ENCODE measurements at regions of chr19 and their contacts with region 1.

Region 1: DNA sequence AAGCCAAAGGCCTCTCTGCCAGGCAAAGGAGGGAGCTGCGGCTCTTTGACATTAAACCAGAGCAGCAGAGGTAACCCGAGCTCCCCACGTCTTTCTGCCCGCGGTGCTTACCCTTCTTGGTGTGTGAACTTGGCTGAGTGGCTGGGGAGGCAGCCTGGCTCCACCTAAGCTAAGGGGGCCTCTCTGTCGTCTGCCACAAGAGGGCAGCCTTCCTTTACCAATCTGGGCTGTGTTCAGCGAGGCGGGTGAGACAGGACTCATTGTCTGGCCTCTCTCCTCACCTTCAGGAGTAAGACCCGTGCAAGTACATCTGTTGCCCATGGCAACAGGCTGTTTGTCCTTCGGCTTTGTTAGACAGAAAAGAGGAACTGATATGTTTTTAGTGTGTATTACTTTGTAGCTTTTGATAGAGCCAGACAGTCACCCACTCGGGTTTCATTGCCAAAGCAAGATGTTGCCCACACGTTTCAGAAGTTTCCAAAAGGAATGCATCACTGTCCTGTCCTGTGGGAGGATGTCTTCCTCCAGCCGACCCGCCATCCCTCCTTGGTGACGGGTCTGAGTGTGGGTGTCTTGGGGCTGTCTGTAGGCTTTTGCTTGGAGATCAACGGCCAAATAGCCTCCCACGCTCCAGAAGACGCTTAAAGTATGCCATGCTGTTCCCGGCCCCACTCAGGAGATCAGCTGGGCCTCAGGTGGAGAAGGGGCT is 4.6 kb downstream of the POP4 start:
- DNase-seq: peak in 1 of 2 donors; percentile 89
- H3K4me3 ChIP-seq: no peak overlapping the region
- H3K27ac ChIP-seq: no peak overlapping the region
- H3K4me1 ChIP-seq: peaks cover 0 to 3% of the 10 kb centered on the region in 2 donors
- H3K27me3 ChIP-seq: no peaks in the 10 kb centered on the region
- CTCF ChIP-seq: peak; percentile 78 to 86 (median 83)

Region 2: DNA sequence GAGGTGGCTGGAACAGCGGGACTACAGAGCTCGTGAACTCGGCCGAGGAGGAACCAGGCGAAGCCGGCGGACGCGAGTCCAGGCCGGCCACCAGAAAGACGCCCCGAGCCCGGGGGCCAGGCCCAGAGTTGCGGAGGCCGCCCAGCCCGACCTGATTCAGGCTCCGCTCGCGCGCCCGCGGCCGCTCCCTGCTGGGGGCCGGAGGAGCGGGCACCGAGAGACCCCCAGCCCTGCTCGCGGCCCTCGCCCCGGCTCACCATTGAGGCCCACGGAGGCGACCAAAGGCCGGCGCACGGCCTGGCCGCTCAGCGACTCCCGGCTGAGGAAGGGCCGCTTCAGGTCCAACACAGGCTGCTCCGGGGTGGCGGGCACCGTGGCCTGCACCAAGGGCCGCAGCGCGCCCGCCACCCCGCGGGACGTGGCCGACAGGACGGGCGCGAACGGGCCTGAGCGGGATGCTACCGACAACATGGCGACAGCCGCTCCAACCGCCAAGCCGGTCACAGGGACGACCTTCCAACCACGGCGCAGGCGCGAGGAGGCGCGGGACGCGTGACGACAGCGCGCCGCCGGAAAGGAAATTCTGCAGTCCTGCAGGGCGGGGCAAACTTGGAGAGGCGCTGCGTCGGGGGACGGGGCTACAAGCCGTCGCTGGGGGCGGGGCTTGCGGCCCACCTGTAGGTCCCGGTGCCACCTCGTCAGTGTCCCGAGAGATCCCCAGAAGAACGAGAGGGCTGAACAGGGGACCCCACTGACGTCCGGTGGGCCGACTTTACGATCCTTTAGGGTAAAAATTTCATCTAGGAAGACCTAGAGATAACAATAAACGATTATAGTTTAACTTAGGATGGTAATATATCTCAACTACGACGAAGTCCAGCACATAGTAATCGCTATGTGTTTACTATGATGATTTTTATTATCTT is 397.8 kb before region 1 on chr19 and contains the start of gene UQCRFS1:
- intact Hi-C with region 1: loop called (anchors 10 kb)
- DNase-seq: peak; percentile 73 to 96
- H3K4me3 ChIP-seq: peak within 1 kb of the TSS; percentile 70 to 92
- H3K27ac ChIP-seq: peak within 1 kb of the TSS; percentile 86 to 92
- H3K4me1 ChIP-seq: peaks cover 0 to 5% of the 10 kb centered on the region in 2 donors
- H3K27me3 ChIP-seq: no peaks in the 10 kb centered on the region
- CTCF ChIP-seq: no peak
- total RNA-seq, gene UQCRFS1: 21.4 TPM

Region 3: DNA sequence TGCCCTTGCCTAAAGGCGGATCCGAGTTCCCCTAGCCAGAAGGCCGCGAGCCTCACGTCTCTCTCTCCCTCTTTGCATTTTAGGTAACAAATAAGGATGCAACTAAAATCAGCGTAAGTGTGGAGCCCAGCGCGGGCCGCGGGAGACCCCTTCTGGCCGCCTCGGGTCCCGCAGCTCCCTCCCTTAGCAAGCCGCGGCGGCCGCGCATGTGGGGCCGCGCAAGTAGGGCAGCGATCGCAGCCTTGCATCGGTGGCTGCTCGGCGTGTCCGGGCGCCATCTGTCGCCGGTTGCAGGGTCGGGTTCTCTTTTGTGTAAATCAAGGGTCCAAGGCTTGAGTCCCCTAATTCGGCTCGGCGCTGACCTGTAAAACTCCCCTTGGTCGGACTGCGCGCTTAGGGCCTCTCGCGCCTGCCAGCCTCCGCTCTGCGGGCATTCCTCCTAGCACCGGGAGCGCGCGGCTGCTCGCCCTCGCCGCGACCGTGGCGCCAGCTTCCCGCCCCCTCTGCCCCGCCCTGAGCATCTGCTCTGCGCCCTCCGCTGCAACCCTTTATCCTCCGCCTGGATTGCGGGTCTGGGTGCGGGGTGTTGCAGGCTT is 82.3 kb before region 1 on chr19:
- intact Hi-C with region 1: no loop called
- DNase-seq: no peak
- H3K4me3 ChIP-seq: peak overlapping the region; percentile 30 to 45
- H3K27ac ChIP-seq: no peak overlapping the region
- H3K4me1 ChIP-seq: peaks cover 3 to 6% of the 10 kb centered on the region in 2 donors
- H3K27me3 ChIP-seq: peaks cover 41% of the 10 kb centered on the region
- CTCF ChIP-seq: peak in 2 of 3 experiments; percentile 38 to 62

Region 4: DNA sequence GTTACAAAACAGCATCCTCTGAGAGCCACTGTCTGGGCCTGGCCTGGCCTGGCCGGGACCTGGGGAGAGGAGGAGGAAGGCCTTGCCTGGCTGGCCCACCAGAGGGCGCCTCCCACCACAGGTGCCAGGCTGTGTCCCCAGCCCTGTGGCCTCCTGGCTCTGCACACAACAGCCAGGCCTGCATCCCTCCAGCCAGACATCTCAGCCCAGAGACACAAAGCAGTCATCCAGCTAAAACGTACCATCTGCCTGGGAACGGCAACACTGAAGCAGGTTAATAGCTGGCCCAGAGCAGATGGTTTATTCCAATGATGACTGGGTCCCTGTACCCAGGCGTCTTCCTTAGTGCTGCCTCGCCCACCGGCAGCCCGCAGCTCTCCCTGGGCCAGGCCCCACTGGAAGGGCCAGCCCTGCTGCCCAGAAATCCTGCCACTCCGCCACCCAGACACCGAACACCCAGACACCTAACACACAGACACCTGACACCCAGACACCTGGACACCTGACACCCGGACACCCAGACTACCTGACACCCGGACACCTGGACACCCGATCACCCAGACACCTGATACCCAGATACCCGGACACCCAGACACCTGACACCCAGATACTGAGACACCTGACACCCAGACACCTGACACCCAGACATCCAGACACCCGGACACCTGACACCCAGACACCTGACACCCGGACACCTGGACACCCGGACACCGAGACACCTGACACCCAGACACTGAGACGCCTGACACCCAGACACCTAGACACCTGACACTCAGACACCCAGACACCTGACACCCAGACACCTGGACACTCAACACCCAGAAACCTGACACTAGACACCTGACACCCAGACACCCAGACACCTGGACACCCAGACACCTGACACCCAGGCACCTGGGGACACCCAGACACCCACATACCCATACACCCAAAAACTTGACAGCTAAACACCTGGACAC is 84.2 kb after region 1 on chr19:
- intact Hi-C with region 1: loop called (anchors 1 kb)
- DNase-seq: peak in 1 of 2 donors; percentile 91
- H3K4me3 ChIP-seq: no peak overlapping the region
- H3K27ac ChIP-seq: peak overlapping the region; percentile 37 to 61
- H3K4me1 ChIP-seq: peaks cover 0 to 9% of the 10 kb centered on the region in 2 donors
- H3K27me3 ChIP-seq: no peaks in the 10 kb centered on the region
- CTCF ChIP-seq: peak; percentile 75 to 93 (median 90)

Region 5: DNA sequence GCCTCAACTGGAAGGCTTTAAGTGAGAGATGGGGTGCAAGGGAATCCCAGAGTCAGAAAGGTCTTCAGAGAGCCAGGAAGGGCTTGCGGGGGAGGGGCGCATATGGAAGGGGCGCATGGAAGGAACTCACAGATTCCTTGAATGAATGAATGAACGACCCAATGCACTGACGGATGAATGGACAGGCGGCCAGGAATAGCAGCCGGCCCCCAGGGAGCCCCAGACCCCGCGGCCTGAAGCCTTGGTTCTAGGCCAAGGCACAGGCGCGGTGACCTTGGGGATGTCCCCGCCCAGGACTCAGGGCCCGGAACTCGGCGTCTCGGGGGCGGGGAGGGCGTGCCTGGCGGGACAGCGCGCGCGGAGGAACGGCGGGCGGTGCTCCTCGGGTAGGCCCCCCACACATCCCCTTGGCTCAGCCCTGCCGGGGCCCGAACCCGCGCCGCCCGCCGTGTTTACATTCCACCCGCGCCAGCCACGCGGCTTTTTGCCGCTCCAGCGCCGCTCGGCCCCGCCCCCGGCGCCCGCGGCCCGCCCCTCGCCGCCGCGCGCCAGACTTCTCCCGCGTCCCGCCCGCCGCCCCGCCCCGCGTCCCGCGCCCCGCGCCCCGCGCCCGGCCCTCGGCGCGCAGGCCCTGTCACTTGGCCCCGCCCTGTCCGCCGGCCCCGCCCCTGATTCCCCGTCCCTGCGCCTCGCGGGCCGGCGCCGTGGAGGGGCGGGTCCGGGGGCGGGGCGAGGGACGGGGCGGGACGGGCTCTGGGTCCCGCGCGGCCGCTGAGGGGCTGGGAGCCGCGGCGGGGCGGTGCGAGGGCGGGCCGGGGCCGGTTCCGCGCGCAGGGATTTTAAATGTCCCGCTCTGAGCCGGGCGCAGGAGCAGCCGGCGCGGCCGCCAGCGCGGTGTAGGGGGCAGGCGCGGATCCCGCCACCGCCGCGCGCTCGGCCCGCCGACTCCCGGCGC is 200.7 kb after region 1 on chr19 and contains the start of gene CCNE1:
- intact Hi-C with region 1: loop called (anchors 2 kb)
- DNase-seq: peak; percentile 55 to 95
- H3K4me3 ChIP-seq: peak within 1 kb of the TSS; percentile 75 to 79
- H3K27ac ChIP-seq: no peak within 1 kb of the TSS
- H3K4me1 ChIP-seq: no peaks in the 10 kb centered on the region
- H3K27me3 ChIP-seq: no peaks in the 10 kb centered on the region
- CTCF ChIP-seq: no peak
- total RNA-seq, gene CCNE1: not detected

Region 6: GRCh38 chr19:29873024-29873800 is 262.5 kb after region 1 on chr19:
- intact Hi-C with region 1: loop called (anchors 10 kb)
- DNase-seq: peak in 1 of 2 donors; percentile 68
- H3K4me3 ChIP-seq: peak overlapping the region; percentile 58 to 63
- H3K27ac ChIP-seq: no peak overlapping the region
- H3K4me1 ChIP-seq: peaks cover 8 to 9% of the 10 kb centered on the region in 2 donors
- H3K27me3 ChIP-seq: peaks cover 9% of the 10 kb centered on the region
- CTCF ChIP-seq: peak; percentile 62 to 80 (median 78)